ENCODE measurements at regions of chr20 and their contacts with region 1.

Region 1: GRCh38 chr20:48620519-48621254 is 207.1 kb downstream of the PREX1 start:
- DNase-seq: peak; percentile 90
- H3K4me3 ChIP-seq: peak overlapping the region; percentile 33 to 52; a peak in 3 of 4 replicates
- H3K27ac ChIP-seq: peak overlapping the region in 1 of 2 experiments; percentile 83; a peak in 2 of 4 replicates
- H3K4me1 ChIP-seq: peaks cover 0 to 27% of the 10 kb centered on the region in 2 experiments; a peak in 2 of 4 replicates
- H3K27me3 ChIP-seq: no peaks in the 10 kb centered on the region
- CTCF ChIP-seq: peak; percentile 82
- EP300 ChIP-seq: no peak
- RAD21 ChIP-seq: peak; percentile 97

Region 2: GRCh38 chr20:47708140-47708807 is 912.4 kb before region 1 on chr20:
- CTCF ChIA-PET with region 1: interaction called, 19 read pairs
- POLR2A ChIA-PET with region 1: interaction called, 4 read pairs
- DNase-seq: no peak
- H3K4me3 ChIP-seq: no peak overlapping the region
- H3K27ac ChIP-seq: peak overlapping the region in 1 of 2 experiments; percentile 90; a peak in 2 of 4 replicates
- H3K4me1 ChIP-seq: peaks cover 0 to 47% of the 10 kb centered on the region in 2 experiments; a peak in 2 of 4 replicates
- H3K27me3 ChIP-seq: no peaks in the 10 kb centered on the region
- CTCF ChIP-seq: no peak
- EP300 ChIP-seq: no peak
- RAD21 ChIP-seq: no peak

Region 3: GRCh38 chr20:47956342-47956995 is 664.2 kb before region 1 on chr20:
- CTCF ChIA-PET with region 1: interaction called, 16 read pairs
- POLR2A ChIA-PET with region 1: no interaction called
- DNase-seq: no peak
- H3K4me3 ChIP-seq: no peak overlapping the region
- H3K27ac ChIP-seq: no peak overlapping the region
- H3K4me1 ChIP-seq: peaks cover 0 to 38% of the 10 kb centered on the region in 2 experiments; a peak in 1 of 4 replicates
- H3K27me3 ChIP-seq: no peaks in the 10 kb centered on the region
- CTCF ChIP-seq: no peak
- EP300 ChIP-seq: no peak
- RAD21 ChIP-seq: no peak

Region 4: GRCh38 chr20:48301189-48301588 is 319.5 kb before region 1 on chr20:
- CTCF ChIA-PET with region 1: interaction called, 36 read pairs
- POLR2A ChIA-PET with region 1: no interaction called
- DNase-seq: no peak
- H3K4me3 ChIP-seq: no peak overlapping the region
- H3K27ac ChIP-seq: no peak overlapping the region
- H3K4me1 ChIP-seq: peaks cover 10 to 22% of the 10 kb centered on the region in 2 experiments
- H3K27me3 ChIP-seq: no peaks in the 10 kb centered on the region
- CTCF ChIP-seq: no peak
- EP300 ChIP-seq: no peak
- RAD21 ChIP-seq: no peak

Region 5: GRCh38 chr20:48404598-48405192 is 216.0 kb before region 1 on chr20:
- CTCF ChIA-PET with region 1: interaction called, 30 read pairs
- POLR2A ChIA-PET with region 1: no interaction called
- DNase-seq: no peak
- H3K4me3 ChIP-seq: no peak overlapping the region
- H3K27ac ChIP-seq: no peak overlapping the region
- H3K4me1 ChIP-seq: peaks cover 0 to 13% of the 10 kb centered on the region in 2 experiments; a peak in 1 of 4 replicates
- H3K27me3 ChIP-seq: no peaks in the 10 kb centered on the region; the same call in 1 of the 2 replicates
- CTCF ChIP-seq: no peak
- EP300 ChIP-seq: no peak
- RAD21 ChIP-seq: no peak

Region 6: GRCh38 chr20:48550610-48551195 is 70.0 kb before region 1 on chr20:
- CTCF ChIA-PET with region 1: interaction called, 141 read pairs
- POLR2A ChIA-PET with region 1: no interaction called
- DNase-seq: no peak
- H3K4me3 ChIP-seq: no peak overlapping the region
- H3K27ac ChIP-seq: no peak overlapping the region
- H3K4me1 ChIP-seq: no peaks in the 10 kb centered on the region
- H3K27me3 ChIP-seq: no peaks in the 10 kb centered on the region
- CTCF ChIP-seq: no peak
- EP300 ChIP-seq: no peak
- RAD21 ChIP-seq: no peak

Region 7: GRCh38 chr20:48661587-48662473 is 41.1 kb after region 1 on chr20:
- CTCF ChIA-PET with region 1: no interaction called
- POLR2A ChIA-PET with region 1: no interaction called
- DNase-seq: no peak
- H3K4me3 ChIP-seq: no peak overlapping the region
- H3K27ac ChIP-seq: no peak overlapping the region
- H3K4me1 ChIP-seq: no peaks in the 10 kb centered on the region; a peak in 1 of 4 replicates
- H3K27me3 ChIP-seq: no peaks in the 10 kb centered on the region
- CTCF ChIP-seq: no peak
- EP300 ChIP-seq: no peak
- RAD21 ChIP-seq: no peak

Measured in SK-N-SH (cell line).